ENCODE measurements at regions of chr10 and their contacts with region 1.

Region 1: DNA sequence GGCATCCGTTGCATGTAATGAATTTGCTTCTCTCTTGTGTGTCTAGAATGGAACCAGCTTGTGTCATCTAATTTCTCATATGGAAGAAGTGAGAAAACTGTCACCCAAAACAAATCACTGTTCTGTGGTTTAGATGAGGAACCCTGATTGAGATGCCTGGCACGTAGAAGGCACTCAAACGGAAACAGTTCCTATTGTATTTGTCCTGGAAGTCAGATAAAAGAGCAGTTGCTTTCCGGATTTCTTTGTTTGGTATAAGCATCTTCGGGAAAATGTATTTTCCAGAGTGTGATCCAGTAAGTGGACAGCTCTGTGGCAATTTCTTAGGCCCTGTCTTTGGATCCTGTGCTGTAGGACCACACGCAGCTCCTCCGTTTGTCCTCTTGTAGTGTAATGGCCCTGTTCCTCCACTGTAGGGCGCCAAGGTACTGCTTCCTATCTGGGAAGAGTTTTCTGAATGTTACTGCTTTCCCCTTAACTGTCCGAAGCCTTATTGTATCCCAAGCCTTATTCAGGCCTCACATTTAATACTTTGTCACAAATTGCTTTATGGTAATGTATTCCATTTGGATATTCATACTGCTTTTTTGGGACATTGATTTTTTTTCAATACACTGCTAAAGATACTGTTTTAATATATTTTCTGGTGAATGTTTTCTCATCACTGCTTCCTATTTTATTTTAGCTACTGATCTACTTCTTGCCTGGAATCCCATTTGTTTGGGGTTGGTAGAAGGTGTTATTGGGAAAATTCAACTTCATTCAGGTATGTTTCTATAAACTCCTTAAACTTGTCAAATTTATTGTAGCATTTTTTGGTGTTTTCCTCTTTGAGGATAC is 24.8 kb downstream of the INPP5F start:
- DNase-seq: peak; percentile 62
- CTCF ChIP-seq: peak; percentile 82

Region 2: GRCh38 chr10:119521443-119522204 is 229.0 kb before region 1 on chr10:
- CTCF ChIA-PET with region 1: no interaction called
- POLR2A ChIA-PET with region 1: no interaction called
- DNase-seq: no peak
- CTCF ChIP-seq: no peak

Region 3: GRCh38 chr10:119737827-119738226 is 12.8 kb before region 1 on chr10:
- CTCF ChIA-PET with region 1: interaction called, 81 read pairs
- POLR2A ChIA-PET with region 1: no interaction called
- DNase-seq: no peak
- CTCF ChIP-seq: no peak

Region 4: DNA sequence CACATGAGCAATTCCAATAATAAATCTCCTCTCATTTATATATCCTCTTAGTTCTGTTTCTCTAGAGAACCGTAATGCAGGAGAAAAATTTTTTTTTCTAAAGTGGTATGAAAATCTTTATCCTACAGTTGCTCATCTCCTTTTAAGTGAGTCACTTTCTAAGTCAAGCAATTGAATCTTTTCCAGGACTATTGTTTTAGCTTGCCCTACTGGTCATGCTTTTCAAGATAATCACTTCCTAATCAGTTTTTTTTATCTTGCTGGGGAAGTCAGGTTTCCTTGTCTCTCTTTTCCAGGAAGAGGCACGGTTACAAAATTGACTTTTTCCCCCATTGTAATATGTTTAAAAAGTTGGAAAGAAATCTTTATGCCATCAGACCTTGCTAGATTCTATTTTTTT is 19.3 kb after region 1 on chr10:
- CTCF ChIA-PET with region 1: interaction called, 37 read pairs
- POLR2A ChIA-PET with region 1: no interaction called
- DNase-seq: no peak
- CTCF ChIP-seq: no peak

Region 5: DNA sequence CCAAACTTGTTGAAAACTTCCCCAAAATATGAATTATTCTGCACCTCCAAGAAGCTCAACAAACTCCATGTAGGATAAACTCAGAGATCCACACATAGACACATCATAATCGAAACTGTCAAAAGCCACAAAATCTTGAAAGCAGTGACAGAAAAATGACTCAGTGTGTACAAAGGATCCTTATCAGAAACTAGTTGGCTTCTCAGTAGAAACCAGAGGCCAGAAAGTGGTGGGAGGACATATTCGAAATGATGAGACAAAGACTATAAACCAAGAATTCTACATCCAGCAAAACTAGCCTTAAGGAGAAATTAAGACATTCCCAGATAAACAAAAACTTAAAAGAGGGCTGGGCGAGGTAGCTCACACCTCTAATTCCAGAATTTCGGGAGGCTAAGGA is 83.6 kb after region 1 on chr10:
- CTCF ChIA-PET with region 1: interaction called, 10 read pairs
- POLR2A ChIA-PET with region 1: no interaction called
- DNase-seq: no peak
- CTCF ChIP-seq: no peak

Measured in GM10248 (cell line).